Activated CD8-positive, alpha-beta T cell treated with anti-CD3 and anti-CD28 coated beads, Interleukin-2, amount 10 ng/mL, durations not matched to agents 7 days and 5 days (primary cell): ENCODE measurements at regions of chr2 and their contacts with region 1.

Region 1: DNA sequence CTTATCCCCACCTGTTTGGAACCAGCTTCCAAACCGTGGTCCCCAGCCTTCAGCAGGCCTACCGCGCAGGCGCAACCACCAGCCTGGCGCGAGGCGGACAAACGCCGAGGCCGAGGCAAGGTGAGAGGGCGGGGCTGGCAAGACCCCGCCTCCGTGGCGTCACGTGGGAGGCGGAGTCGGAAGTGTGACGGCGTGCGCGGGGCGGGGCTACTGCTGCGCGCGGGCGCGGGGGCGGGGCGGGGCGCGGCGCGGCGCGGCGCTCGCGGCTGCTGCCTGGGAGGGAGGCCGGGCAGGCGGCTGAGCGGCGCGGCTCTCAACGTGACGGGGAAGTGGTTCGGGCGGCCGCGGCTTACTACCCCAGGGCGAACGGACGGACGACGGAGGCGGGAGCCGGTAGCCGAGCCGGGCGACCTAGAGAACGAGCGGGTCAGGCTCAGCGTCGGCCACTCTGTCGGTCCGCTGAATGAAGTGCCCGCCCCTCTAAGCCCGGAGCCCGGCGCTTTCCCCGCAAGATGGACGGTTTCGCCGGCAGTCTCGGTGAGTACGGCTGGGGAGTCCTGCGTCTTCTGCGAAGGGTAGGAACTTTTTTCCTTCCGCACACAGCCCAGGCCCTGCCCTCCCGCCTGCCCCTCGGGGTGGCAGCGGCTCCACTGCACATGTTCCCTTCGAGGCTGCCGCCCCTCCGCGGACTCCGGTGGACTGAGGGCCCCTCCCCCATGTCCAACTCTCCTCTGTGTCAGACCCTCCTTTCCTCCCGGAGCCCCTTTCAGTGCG is at the start of gene EML4:
- DNase-seq: peak; percentile 91
- ATAC-seq: peak; percentile 88
- H3K4me3 Mint-ChIP-seq: no peak within 1 kb of the TSS
- H3K27ac Mint-ChIP-seq: no peak within 1 kb of the TSS
- H3K4me1 Mint-ChIP-seq: peaks cover 23% of the 10 kb centered on the region
- H3K27me3 Mint-ChIP-seq: peaks cover 2% of the 10 kb centered on the region
- total RNA-seq, gene EML4: 88.0 to 89.7 TPM

Region 2: GRCh38 chr2:42132966-42133641 is 36.2 kb before region 1 on chr2:
- CTCF ChIA-PET with region 1: interaction called, 18 read pairs
- POLR2A ChIA-PET with region 1: interaction called, 25 read pairs
- DNase-seq: peak; percentile 96
- ATAC-seq: peak; percentile 92
- H3K4me3 Mint-ChIP-seq: peak overlapping the region; percentile 65
- H3K27ac Mint-ChIP-seq: peak overlapping the region; percentile 95
- H3K4me1 Mint-ChIP-seq: peaks cover 89% of the 10 kb centered on the region
- H3K27me3 Mint-ChIP-seq: no peaks in the 10 kb centered on the region

Region 3: DNA sequence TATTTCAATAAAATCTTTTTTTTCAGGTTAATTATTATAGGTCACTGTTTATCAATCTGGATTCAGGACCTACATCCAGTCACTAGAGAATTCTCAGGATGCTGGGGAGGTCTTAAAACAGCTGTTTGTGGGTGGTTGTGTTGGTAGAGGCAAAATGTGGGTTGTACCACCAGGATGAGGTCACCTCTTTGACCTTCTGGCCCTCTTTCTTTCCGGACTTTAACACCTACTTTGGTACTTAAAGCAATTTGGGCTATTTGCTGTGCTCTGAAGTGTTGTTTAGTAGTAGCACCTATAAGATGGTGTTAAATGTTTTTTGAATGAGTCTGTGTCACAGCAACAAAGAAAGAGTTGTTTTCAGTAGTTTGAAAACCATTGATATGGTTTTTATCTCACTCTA is 14.5 kb after region 1 on chr2:
- CTCF ChIA-PET with region 1: interaction called, 10 read pairs
- POLR2A ChIA-PET with region 1: interaction called, 3 read pairs
- DNase-seq: no peak
- ATAC-seq: no peak
- H3K4me3 Mint-ChIP-seq: no peak overlapping the region
- H3K27ac Mint-ChIP-seq: no peak overlapping the region
- H3K4me1 Mint-ChIP-seq: peaks cover 46% of the 10 kb centered on the region
- H3K27me3 Mint-ChIP-seq: no peaks in the 10 kb centered on the region

Region 4: DNA sequence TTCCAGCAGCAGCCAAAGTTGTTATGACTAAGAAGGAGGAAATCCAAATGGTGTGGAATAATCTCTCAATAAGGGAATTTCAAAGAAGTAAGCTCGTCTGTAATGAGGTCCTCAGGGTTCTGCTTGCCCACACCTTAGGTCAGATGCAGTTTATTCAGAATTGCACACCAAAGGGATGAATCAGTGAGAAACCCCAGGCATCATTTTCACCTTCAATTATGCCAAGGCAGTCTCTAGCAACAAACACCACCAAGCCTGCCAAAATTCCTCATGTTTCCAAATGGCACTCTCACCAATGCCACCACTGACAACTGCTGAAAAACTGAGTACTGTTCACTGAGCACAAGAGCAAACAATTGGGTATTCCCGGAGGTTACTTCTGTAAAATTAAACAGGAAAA is 280.8 kb after region 1 on chr2:
- CTCF ChIA-PET with region 1: no interaction called
- POLR2A ChIA-PET with region 1: no interaction called
- DNase-seq: no peak
- ATAC-seq: no peak
- H3K4me3 Mint-ChIP-seq: no peak overlapping the region
- H3K27ac Mint-ChIP-seq: no peak overlapping the region
- H3K4me1 Mint-ChIP-seq: no peaks in the 10 kb centered on the region
- H3K27me3 Mint-ChIP-seq: peaks cover 2% of the 10 kb centered on the region